ENCODE measurements at regions of chr12 and their contacts with region 1.

Region 1: GRCh38 chr12:56117778-56118687 is at the start of gene ZC3H10:
- DNase-seq: peak; percentile 99
- ATAC-seq: peak; percentile 76
- H3K4me3 ChIP-seq: peak within 1 kb of the TSS; percentile 66 to 99 (median 97)
- H3K4me3 Mint-ChIP-seq: peak within 1 kb of the TSS; percentile 99
- H3K27ac ChIP-seq: peak within 1 kb of the TSS; percentile 94 to 95
- H3K27ac Mint-ChIP-seq: peak within 1 kb of the TSS; percentile 99
- H3K4me1 ChIP-seq: peaks cover 17 to 30% of the 10 kb centered on the region in 2 donors
- H3K4me1 Mint-ChIP-seq: peaks cover 36% of the 10 kb centered on the region
- H3K27me3 ChIP-seq: no peaks in the 10 kb centered on the region
- H3K27me3 Mint-ChIP-seq: no peaks in the 10 kb centered on the region
- CTCF ChIP-seq: peak; percentile 61
- total RNA-seq, gene ZC3H10: 21.7 and 25.5 TPM in 2 replicates

Region 2: GRCh38 chr12:55738123-55739024 is 379.7 kb before region 1 on chr12:
- CTCF ChIA-PET with region 1: interaction called, 12 read pairs
- POLR2A ChIA-PET with region 1: interaction called, 5 read pairs
- intact Hi-C with region 1: loop called (anchors 1 kb)
- DNase-seq: peak; percentile 89
- ATAC-seq: peak; percentile 81
- H3K4me3 ChIP-seq: peak overlapping the region; percentile 61 to 97 (median 89)
- H3K4me3 Mint-ChIP-seq: peak overlapping the region; percentile 89
- H3K27ac ChIP-seq: peak overlapping the region; percentile 70 to 84
- H3K27ac Mint-ChIP-seq: peak overlapping the region; percentile 91
- H3K4me1 ChIP-seq: peaks cover 15 to 20% of the 10 kb centered on the region in 2 donors
- H3K4me1 Mint-ChIP-seq: peaks cover 21% of the 10 kb centered on the region
- H3K27me3 ChIP-seq: no peaks in the 10 kb centered on the region
- H3K27me3 Mint-ChIP-seq: no peaks in the 10 kb centered on the region
- CTCF ChIP-seq: peak; percentile 91

Region 3: DNA sequence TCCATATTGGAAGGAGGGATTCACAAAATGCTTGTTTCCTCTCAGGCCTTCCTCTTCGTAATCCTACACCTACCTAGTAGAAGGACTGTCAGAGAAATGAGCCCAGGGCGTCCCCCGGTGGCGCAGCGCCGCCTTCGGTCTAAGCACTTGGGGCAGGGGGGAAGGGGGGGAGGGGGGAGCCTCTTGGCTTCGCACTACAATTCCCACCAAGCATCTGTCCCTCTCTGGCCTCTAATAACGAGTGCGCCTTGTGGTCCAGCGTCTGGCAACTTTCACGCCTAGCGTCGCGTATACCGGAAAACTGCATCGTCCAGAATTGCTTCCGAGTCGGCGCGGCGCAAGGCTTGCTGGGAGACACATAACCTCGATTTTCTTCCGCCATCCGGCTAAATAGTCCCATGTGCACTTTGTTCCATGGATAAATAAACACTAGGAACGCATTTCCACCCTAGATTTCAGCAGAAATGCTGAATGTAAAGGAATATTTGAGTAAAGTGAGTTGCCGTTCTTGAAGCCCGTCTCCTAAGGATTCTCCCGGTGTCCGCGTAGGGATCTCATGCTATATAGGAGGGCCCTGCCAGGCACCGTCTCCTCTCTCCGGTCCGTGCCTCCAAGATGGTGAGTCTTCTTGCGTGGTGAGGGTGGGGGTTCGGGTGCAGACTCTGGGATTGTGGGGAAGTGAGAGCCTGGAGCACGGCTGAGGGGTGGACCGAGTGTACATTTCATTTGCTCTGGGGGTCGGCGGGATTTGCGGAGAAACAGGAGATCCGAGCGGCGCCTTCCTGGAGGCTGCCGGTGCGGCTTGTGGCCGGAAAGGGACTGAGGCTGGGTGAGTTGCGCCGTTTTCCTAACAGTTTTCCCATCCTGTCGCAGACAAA is 76.2 kb before region 1 on chr12 and contains the start of gene RPS26:
- CTCF ChIA-PET with region 1: interaction called, 4 read pairs
- POLR2A ChIA-PET with region 1: interaction called, 4 read pairs
- intact Hi-C with region 1: loop called (anchors 1 kb)
- DNase-seq: peak; percentile 99
- ATAC-seq: peak; percentile 93
- H3K4me3 ChIP-seq: peak within 1 kb of the TSS; percentile 70 to 99 (median 91)
- H3K4me3 Mint-ChIP-seq: peak within 1 kb of the TSS; percentile 98
- H3K27ac ChIP-seq: peak within 1 kb of the TSS; percentile 82 to 90
- H3K27ac Mint-ChIP-seq: peak within 1 kb of the TSS; percentile 97
- H3K4me1 ChIP-seq: peaks cover 19 to 21% of the 10 kb centered on the region in 2 donors
- H3K4me1 Mint-ChIP-seq: peaks cover 24% of the 10 kb centered on the region
- H3K27me3 ChIP-seq: no peaks in the 10 kb centered on the region
- H3K27me3 Mint-ChIP-seq: no peaks in the 10 kb centered on the region
- CTCF ChIP-seq: peak; percentile 67
- total RNA-seq, gene RPS26: 19.4 and 21.0 TPM in 2 replicates

Region 4: GRCh38 chr12:56158029-56158925 is 40.2 kb after region 1 on chr12 and contains the start of gene MYL6:
- CTCF ChIA-PET with region 1: interaction called, 6 read pairs
- POLR2A ChIA-PET with region 1: interaction called, 8 read pairs
- intact Hi-C with region 1: loop called (anchors 5 kb)
- DNase-seq: peak; percentile 96
- ATAC-seq: peak; percentile 87
- H3K4me3 ChIP-seq: peak within 1 kb of the TSS; percentile 80 to 97 (median 94)
- H3K4me3 Mint-ChIP-seq: peak within 1 kb of the TSS; percentile 96
- H3K27ac ChIP-seq: peak within 1 kb of the TSS; percentile 88 to 97
- H3K27ac Mint-ChIP-seq: peak within 1 kb of the TSS; percentile 97
- H3K4me1 ChIP-seq: peaks cover 20 to 40% of the 10 kb centered on the region in 2 donors
- H3K4me1 Mint-ChIP-seq: peaks cover 44% of the 10 kb centered on the region
- H3K27me3 ChIP-seq: no peaks in the 10 kb centered on the region
- H3K27me3 Mint-ChIP-seq: no peaks in the 10 kb centered on the region
- CTCF ChIP-seq: no peak
- total RNA-seq, gene MYL6: 645 and 675 TPM in 2 replicates

Region 5: GRCh38 chr12:56266693-56267442 is 148.8 kb after region 1 on chr12 and contains the start of gene COQ10A:
- CTCF ChIA-PET with region 1: interaction called, 3 read pairs
- POLR2A ChIA-PET with region 1: no interaction called
- intact Hi-C with region 1: loop called (anchors 2 kb)
- DNase-seq: peak; percentile 94
- ATAC-seq: peak; percentile 89
- H3K4me3 ChIP-seq: peak within 1 kb of the TSS; percentile 65 to 86 (median 75)
- H3K4me3 Mint-ChIP-seq: peak within 1 kb of the TSS; percentile 91
- H3K27ac ChIP-seq: peak within 1 kb of the TSS; percentile 94
- H3K27ac Mint-ChIP-seq: peak within 1 kb of the TSS; percentile 95
- H3K4me1 ChIP-seq: peaks cover 10 to 15% of the 10 kb centered on the region in 2 donors
- H3K4me1 Mint-ChIP-seq: peaks cover 20% of the 10 kb centered on the region
- H3K27me3 ChIP-seq: no peaks in the 10 kb centered on the region
- H3K27me3 Mint-ChIP-seq: no peaks in the 10 kb centered on the region
- CTCF ChIP-seq: peak; percentile 72
- total RNA-seq, gene COQ10A: 73.5 and 76.3 TPM in 2 replicates

Region 6: GRCh38 chr12:56468216-56469006 is 350.4 kb after region 1 on chr12 and contains the start of gene SPRYD4:
- CTCF ChIA-PET with region 1: interaction called, 5 read pairs
- POLR2A ChIA-PET with region 1: interaction called, 3 read pairs
- intact Hi-C with region 1: loop called (anchors 1 kb)
- DNase-seq: peak; percentile 97
- ATAC-seq: peak; percentile 93
- H3K4me3 ChIP-seq: peak within 1 kb of the TSS; percentile 91 to 100 (median 96)
- H3K4me3 Mint-ChIP-seq: peak within 1 kb of the TSS; percentile 93
- H3K27ac ChIP-seq: peak within 1 kb of the TSS; percentile 86 to 87
- H3K27ac Mint-ChIP-seq: peak within 1 kb of the TSS; percentile 98
- H3K4me1 ChIP-seq: peaks cover 12 to 28% of the 10 kb centered on the region in 2 donors
- H3K4me1 Mint-ChIP-seq: peaks cover 28% of the 10 kb centered on the region
- H3K27me3 ChIP-seq: no peaks in the 10 kb centered on the region
- H3K27me3 Mint-ChIP-seq: no peaks in the 10 kb centered on the region
- CTCF ChIP-seq: peak; percentile 30
- total RNA-seq, gene SPRYD4: 7.4 and 8.0 TPM in 2 replicates

Region 7: DNA sequence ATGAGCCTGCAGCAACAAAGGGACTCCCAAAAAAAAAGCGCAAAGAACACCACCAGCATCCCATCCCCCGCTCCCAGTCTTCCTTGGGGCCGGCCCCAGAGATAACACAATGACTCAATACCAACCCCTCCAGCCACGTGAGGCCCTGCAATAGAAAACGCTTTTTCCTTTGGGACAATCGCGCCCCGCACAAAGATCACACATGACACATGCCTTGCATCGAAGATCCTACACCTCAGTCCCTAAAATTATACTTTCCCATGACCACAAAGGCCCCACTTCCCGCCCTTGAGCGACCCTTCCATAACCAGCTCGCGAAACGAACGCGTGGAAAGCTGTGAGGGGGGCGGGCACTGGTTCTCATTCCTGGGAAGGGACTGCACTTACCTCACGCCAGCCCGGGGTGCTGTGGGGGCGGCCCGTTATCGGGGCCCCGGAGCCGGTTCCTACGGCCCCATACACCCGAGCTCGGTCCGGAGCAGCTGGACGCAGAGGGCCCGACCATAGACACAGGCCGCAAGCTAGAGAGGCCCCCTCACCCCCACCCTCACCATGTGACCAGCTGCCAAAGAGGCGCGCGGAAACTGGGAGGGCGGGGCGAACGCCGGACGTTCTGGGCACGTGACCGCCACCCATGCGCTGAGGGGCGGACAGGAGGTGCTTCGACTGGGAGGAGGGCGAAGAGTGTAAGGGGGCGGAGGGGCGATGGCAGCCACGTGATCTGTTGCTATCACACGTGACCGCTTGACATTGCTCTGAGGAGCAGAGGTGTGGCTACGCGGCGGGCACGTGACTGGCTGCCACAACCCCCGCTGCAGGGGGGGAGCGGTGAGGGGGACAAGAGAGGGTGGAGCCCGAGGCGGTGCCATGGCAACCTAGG is 1634.0 kb after region 1 on chr12 and contains the start of gene CDK4:
- CTCF ChIA-PET with region 1: no interaction called
- POLR2A ChIA-PET with region 1: no interaction called
- intact Hi-C with region 1: loop called (anchors 5 kb)
- DNase-seq: peak; percentile 100
- ATAC-seq: peak; percentile 78
- H3K4me3 ChIP-seq: peak within 1 kb of the TSS; percentile 51 to 84 (median 78)
- H3K4me3 Mint-ChIP-seq: peak within 1 kb of the TSS; percentile 91
- H3K27ac ChIP-seq: peak within 1 kb of the TSS; percentile 74 to 98
- H3K27ac Mint-ChIP-seq: peak within 1 kb of the TSS; percentile 95
- H3K4me1 ChIP-seq: peaks cover 39 to 50% of the 10 kb centered on the region in 2 donors
- H3K4me1 Mint-ChIP-seq: peaks cover 55% of the 10 kb centered on the region
- H3K27me3 ChIP-seq: no peaks in the 10 kb centered on the region
- H3K27me3 Mint-ChIP-seq: no peaks in the 10 kb centered on the region
- CTCF ChIP-seq: no peak
- total RNA-seq, gene CDK4: 43.1 and 44.6 TPM in 2 replicates

Measured in B cell (primary cell).